ENCODE measurements at regions of chr11 and their contacts with region 1.

Region 1: DNA sequence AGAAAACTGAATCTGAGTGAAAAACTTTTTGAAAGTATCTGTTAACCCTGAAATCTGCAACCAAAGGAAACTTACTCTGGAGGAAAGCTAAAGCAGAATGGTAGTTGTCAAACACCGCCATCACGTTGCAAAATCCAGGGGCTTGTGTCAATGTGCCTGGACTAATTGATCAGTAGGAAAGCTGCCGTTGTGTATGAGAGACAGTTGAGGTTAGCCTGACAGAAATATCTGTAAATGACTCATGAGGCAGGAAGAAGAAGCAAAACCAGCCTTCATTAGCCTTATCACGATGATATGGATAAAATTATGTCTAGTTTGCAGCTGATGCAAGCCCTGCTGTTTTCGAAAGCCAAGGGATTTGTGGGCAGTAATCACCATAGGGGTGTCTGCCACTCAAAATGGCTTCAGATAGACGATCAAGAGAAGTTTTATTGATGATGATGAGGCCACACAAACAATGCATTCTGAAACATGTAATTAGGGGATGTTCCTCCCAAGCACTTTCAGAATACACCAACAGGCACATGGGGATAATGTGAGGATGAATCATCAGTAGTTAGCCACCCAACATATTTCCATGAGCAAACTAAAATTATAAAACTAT is 8.9 kb downstream of the SCGB1A1 start:
- DNase-seq: peak; percentile 48
- H3K4me3 Mint-ChIP-seq: peak overlapping the region; percentile 41
- H3K27ac Mint-ChIP-seq: peak overlapping the region; percentile 91
- H3K4me1 Mint-ChIP-seq: peaks cover 68% of the 10 kb centered on the region
- H3K27me3 Mint-ChIP-seq: peaks cover 1% of the 10 kb centered on the region

Region 2: GRCh38 chr11:62400760-62401159 is 27.0 kb before region 1 on chr11:
- CTCF ChIA-PET with region 1: interaction called, 37 read pairs
- POLR2A ChIA-PET with region 1: interaction called, 7 read pairs
- DNase-seq: no peak
- H3K4me3 Mint-ChIP-seq: no peak overlapping the region
- H3K27ac Mint-ChIP-seq: no peak overlapping the region
- H3K4me1 Mint-ChIP-seq: peaks cover 23% of the 10 kb centered on the region
- H3K27me3 Mint-ChIP-seq: peaks cover 3% of the 10 kb centered on the region

Region 3: GRCh38 chr11:62461740-62462507 is 34.2 kb after region 1 on chr11:
- CTCF ChIA-PET with region 1: interaction called, 13 read pairs
- POLR2A ChIA-PET with region 1: interaction called, 20 read pairs
- DNase-seq: peak; percentile 17
- H3K4me3 Mint-ChIP-seq: peak overlapping the region; percentile 24
- H3K27ac Mint-ChIP-seq: peak overlapping the region; percentile 63
- H3K4me1 Mint-ChIP-seq: peaks cover 23% of the 10 kb centered on the region
- H3K27me3 Mint-ChIP-seq: peaks cover 3% of the 10 kb centered on the region

Region 4: GRCh38 chr11:62513626-62514025 is 85.9 kb after region 1 on chr11:
- CTCF ChIA-PET with region 1: interaction called, 18 read pairs
- POLR2A ChIA-PET with region 1: no interaction called
- DNase-seq: no peak
- H3K4me3 Mint-ChIP-seq: no peak overlapping the region
- H3K27ac Mint-ChIP-seq: no peak overlapping the region
- H3K4me1 Mint-ChIP-seq: peaks cover 5% of the 10 kb centered on the region
- H3K27me3 Mint-ChIP-seq: no peaks in the 10 kb centered on the region

Region 5: GRCh38 chr11:62567018-62567633 is 139.4 kb after region 1 on chr11:
- CTCF ChIA-PET with region 1: interaction called, 228 read pairs
- POLR2A ChIA-PET with region 1: interaction called, 36 read pairs
- DNase-seq: no peak
- H3K4me3 Mint-ChIP-seq: peak overlapping the region; percentile 9
- H3K27ac Mint-ChIP-seq: peak overlapping the region; percentile 73
- H3K4me1 Mint-ChIP-seq: peaks cover 63% of the 10 kb centered on the region
- H3K27me3 Mint-ChIP-seq: no peaks in the 10 kb centered on the region